Right cardiac atrium (tissue), 5 donors: ENCODE measurements at regions of chr1 and their contacts with region 1.

Region 1: GRCh38 chr1:7646981-7647901 is 123.9 kb upstream of the VAMP3 start:
- DNase-seq: peak; percentile 69 to 91 (median 88)
- ATAC-seq: peak; percentile 39 to 42
- H3K4me3 ChIP-seq: no peak overlapping the region
- H3K27ac ChIP-seq: no peak overlapping the region
- H3K4me1 ChIP-seq: peaks cover 5% of the 10 kb centered on the region
- H3K27me3 ChIP-seq: no peaks in the 10 kb centered on the region

Region 2: GRCh38 chr1:7042322-7043190 is 604.7 kb before region 1 on chr1:
- intact Hi-C with region 1: loop called in 2 of 4 experiments (anchors 5 to 10 kb)
- DNase-seq: no peak
- ATAC-seq: no peak
- H3K4me3 ChIP-seq: no peak overlapping the region
- H3K27ac ChIP-seq: no peak overlapping the region
- H3K4me1 ChIP-seq: no peaks in the 10 kb centered on the region
- H3K27me3 ChIP-seq: no peaks in the 10 kb centered on the region

Region 3: GRCh38 chr1:7070389-7071029 is 576.7 kb before region 1 on chr1:
- intact Hi-C with region 1: loop called in 1 of 4 experiments (anchors 10 kb)
- DNase-seq: peak; percentile 54 to 71 (median 66)
- ATAC-seq: peak; percentile 77 to 92
- H3K4me3 ChIP-seq: peak overlapping the region; percentile 8
- H3K27ac ChIP-seq: no peak overlapping the region
- H3K4me1 ChIP-seq: no peaks in the 10 kb centered on the region
- H3K27me3 ChIP-seq: no peaks in the 10 kb centered on the region

Region 4: DNA sequence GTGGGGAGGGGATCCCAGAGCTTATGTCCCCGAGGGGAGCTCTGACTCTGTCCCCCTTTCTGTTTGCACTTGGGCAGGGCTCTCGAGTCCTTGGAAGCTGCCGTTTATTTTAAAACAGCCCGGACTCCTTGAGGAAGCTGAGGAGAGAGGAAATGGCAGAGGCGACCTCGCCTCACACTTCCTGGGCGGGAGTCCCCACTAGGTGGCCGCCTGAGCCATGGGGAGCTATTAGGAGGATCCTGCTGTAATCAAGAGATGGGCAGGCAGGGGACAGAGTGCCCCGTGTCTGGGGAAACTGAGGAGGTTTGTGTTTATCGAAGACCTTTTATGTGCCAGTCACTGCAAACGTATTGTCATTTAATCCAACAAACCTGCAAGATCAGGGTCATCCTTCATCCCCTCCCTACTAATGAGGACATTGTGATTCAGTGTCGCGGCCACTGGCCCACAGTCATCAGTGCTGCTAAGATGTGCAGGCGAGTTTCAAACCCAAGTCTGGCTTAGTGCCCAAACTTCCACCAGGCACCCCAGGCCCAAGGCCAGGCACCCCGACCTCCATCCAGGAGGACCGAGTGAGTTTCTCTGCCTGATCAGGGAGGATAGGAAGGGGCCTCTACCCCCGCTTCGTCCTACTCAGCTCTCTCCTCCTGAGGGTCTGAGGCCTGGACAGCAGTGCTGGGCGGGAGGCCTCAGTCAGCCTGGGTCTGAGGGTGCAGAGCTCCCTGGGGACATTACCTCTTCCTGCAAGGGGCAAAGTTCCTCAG is 193.0 kb before region 1 on chr1:
- intact Hi-C with region 1: loop called (anchors 5 to 10 kb)
- DNase-seq: peak in 2 of 3 donors; percentile 70 to 81
- ATAC-seq: peak; percentile 58 to 59
- H3K4me3 ChIP-seq: no peak overlapping the region
- H3K27ac ChIP-seq: no peak overlapping the region
- H3K4me1 ChIP-seq: no peaks in the 10 kb centered on the region
- H3K27me3 ChIP-seq: no peaks in the 10 kb centered on the region

Region 5: DNA sequence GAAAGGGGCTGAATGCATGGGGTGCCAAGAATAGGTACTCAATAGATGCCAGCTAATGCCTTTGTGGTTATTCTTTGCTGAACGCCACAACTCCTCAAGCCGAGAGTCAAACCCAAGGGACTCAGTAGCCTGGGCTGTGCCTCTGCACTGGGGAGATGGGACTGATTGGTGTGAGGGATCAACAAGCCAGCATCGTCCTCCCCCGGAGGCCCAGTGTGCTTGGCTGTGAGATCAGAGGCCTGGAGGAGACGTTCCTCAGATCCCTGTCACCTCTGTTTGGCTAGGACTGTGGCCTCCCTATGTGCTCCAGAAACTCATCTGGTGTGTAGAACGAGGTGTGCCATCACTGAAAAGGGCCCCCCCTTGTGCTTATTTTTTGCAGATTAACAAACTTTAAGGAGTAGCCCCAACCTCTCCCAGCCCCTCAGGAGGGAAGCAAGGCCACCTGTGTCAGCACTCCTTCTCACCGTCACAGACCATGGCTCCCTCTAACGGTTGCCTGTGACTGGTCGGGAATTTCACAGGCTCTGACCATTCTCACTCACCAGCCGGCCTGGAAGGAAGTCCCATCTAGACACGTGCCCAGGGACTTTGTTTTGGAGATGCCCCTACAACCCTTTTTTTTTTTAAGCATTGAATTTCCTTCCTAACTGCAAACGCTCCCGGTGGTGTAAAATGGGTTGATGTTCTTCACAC is 70.1 kb before region 1 on chr1:
- intact Hi-C with region 1: loop called in 2 of 4 experiments (anchors 5 kb)
- DNase-seq: peak in 1 of 3 donors; percentile 47
- ATAC-seq: peak in 1 of 2 donors; percentile 41
- H3K4me3 ChIP-seq: no peak overlapping the region
- H3K27ac ChIP-seq: no peak overlapping the region
- H3K4me1 ChIP-seq: peaks cover 4% of the 10 kb centered on the region
- H3K27me3 ChIP-seq: no peaks in the 10 kb centered on the region